Endothelial cell of umbilical vein (primary cell): ENCODE measurements at regions of chr2 and their contacts with region 1.

Region 1: DNA sequence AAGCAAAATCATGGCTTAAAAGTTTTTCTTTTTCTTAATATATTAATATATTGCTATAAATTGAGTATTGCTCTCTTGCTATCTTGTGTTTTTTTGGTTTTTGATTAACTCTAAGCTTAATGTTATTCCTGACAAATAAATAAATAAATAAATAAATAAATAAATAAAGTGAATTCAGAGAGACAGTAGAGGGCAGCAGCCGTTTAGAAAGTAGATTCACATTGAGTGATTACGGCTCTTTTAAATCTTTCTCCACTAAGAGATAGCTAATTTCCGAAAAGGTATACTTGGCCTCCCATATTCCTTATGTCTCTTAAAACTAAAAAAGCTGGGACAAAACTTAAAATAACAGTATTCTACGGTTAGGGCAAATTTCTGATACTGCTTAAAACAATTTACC is 34.3 kb downstream of the MSH2 start:
- DNase-seq: peak; percentile 48
- H3K4me3 ChIP-seq: no peak overlapping the region
- H3K27ac ChIP-seq: no peak overlapping the region
- H3K4me1 ChIP-seq: no peaks in the 10 kb centered on the region
- H3K27me3 ChIP-seq: no peaks in the 10 kb centered on the region
- CTCF ChIP-seq: no peak
- POLR2A ChIP-seq: no peak

Region 2: GRCh38 chr2:47339745-47340541 is 97.3 kb before region 1 on chr2:
- CTCF ChIA-PET with region 1: interaction called, 29 read pairs
- POLR2A ChIA-PET with region 1: interaction called, 6 read pairs
- dilution Hi-C with region 1: no loop called
- intact Hi-C with region 1: no loop called
- DNase-seq: no peak
- H3K4me3 ChIP-seq: no peak overlapping the region
- H3K27ac ChIP-seq: no peak overlapping the region
- H3K4me1 ChIP-seq: peaks cover 5% of the 10 kb centered on the region
- H3K27me3 ChIP-seq: no peaks in the 10 kb centered on the region
- CTCF ChIP-seq: no peak
- POLR2A ChIP-seq: no peak

Region 3: DNA sequence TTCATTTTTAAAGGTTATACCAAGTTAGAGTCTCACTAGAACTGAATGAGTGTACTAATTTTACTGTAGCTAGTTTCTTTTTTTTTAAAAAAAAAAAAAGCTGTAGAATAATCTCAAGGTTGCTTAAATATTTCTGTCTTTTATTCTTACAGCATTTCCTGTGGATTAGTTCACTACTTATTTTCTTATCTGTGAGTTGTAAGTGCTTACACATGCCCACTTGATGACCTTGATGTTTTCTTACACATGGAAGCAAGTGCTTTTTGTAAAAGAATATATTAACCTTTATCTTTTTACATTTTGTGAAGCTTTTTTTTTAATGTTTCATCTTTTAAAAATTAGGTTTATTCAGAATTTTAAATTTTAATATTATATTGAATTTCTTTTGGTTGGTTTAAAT is 23.5 kb after region 1 on chr2:
- CTCF ChIA-PET with region 1: interaction called, 11 read pairs
- POLR2A ChIA-PET with region 1: no interaction called
- dilution Hi-C with region 1: no loop called
- intact Hi-C with region 1: no loop called
- DNase-seq: peak; percentile 29
- H3K4me3 ChIP-seq: no peak overlapping the region
- H3K27ac ChIP-seq: no peak overlapping the region
- H3K4me1 ChIP-seq: peaks cover 2% of the 10 kb centered on the region
- H3K27me3 ChIP-seq: no peaks in the 10 kb centered on the region
- CTCF ChIP-seq: no peak
- POLR2A ChIP-seq: no peak

Region 4: DNA sequence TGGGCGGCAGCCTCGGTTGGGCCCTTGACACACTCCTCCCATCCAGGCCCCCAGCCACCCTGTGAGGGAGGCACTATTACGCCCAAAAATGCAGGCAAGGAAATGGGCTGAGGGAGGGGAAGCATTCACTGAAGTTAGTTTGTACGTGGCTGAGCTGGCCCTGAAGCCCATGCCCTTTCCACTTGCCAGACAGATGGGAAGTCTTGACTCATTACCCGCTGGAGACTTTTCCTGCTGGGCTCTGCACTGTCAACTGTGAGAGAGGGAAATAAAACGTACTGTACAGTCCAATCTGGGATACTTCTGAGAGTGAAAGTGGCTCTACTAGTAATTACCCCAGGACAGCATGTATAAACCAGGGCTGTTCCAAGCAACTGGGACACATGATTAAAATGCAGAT is 91.6 kb after region 1 on chr2:
- CTCF ChIA-PET with region 1: interaction called, 24 read pairs
- POLR2A ChIA-PET with region 1: no interaction called
- dilution Hi-C with region 1: no loop called
- intact Hi-C with region 1: no loop called
- DNase-seq: peak; percentile 71
- H3K4me3 ChIP-seq: no peak overlapping the region
- H3K27ac ChIP-seq: peak overlapping the region; percentile 12
- H3K4me1 ChIP-seq: peaks cover 17% of the 10 kb centered on the region
- H3K27me3 ChIP-seq: no peaks in the 10 kb centered on the region
- CTCF ChIP-seq: no peak
- POLR2A ChIP-seq: no peak

Region 5: GRCh38 chr2:47568109-47568850 is 131.0 kb after region 1 on chr2:
- CTCF ChIA-PET with region 1: interaction called, 10 read pairs
- POLR2A ChIA-PET with region 1: no interaction called
- dilution Hi-C with region 1: no loop called
- intact Hi-C with region 1: no loop called
- DNase-seq: no peak
- H3K4me3 ChIP-seq: no peak overlapping the region
- H3K27ac ChIP-seq: no peak overlapping the region
- H3K4me1 ChIP-seq: peaks cover 4% of the 10 kb centered on the region
- H3K27me3 ChIP-seq: peaks cover 33 to 54% of the 10 kb centered on the region in 2 experiments
- CTCF ChIP-seq: no peak
- POLR2A ChIP-seq: no peak

Region 6: GRCh38 chr2:47782671-47783485 is 345.6 kb after region 1 on chr2 and contains the start of gene MSH6:
- CTCF ChIA-PET with region 1: interaction called, 16 read pairs
- POLR2A ChIA-PET with region 1: no interaction called
- dilution Hi-C with region 1: no loop called
- intact Hi-C with region 1: no loop called
- DNase-seq: peak; percentile 90
- H3K4me3 ChIP-seq: peak within 1 kb of the TSS; percentile 64 to 92 (median 89)
- H3K27ac ChIP-seq: peak within 1 kb of the TSS; percentile 77
- H3K4me1 ChIP-seq: peaks cover 9% of the 10 kb centered on the region
- H3K27me3 ChIP-seq: no peaks in the 10 kb centered on the region
- CTCF ChIP-seq: no peak
- POLR2A ChIP-seq: peak; percentile 71
- total RNA-seq, gene MSH6: 59.3 and 74.0 TPM in 2 replicates

Region 7: GRCh38 chr2:48048476-48049171 is 611.3 kb after region 1 on chr2:
- CTCF ChIA-PET with region 1: no interaction called
- POLR2A ChIA-PET with region 1: no interaction called
- dilution Hi-C with region 1: no loop called
- intact Hi-C with region 1: no loop called
- DNase-seq: no peak
- H3K4me3 ChIP-seq: no peak overlapping the region
- H3K27ac ChIP-seq: no peak overlapping the region
- H3K4me1 ChIP-seq: no peaks in the 10 kb centered on the region
- H3K27me3 ChIP-seq: peaks cover 0 to 2% of the 10 kb centered on the region in 2 experiments
- CTCF ChIP-seq: no peak
- POLR2A ChIP-seq: no peak